Activated naive CD4-positive, alpha-beta T cell treated with anti-CD3 and anti-CD28 coated beads for 36 hours (primary cell): ENCODE measurements at regions of chr17 and their contacts with region 1.

Region 1: GRCh38 chr17:31321481-31321880 is at the start of gene EVI2A:
- DNase-seq: peak; percentile 89
- H3K4me3 Mint-ChIP-seq: peak within 1 kb of the TSS; percentile 76
- H3K27ac Mint-ChIP-seq: peak within 1 kb of the TSS; percentile 96
- H3K4me1 Mint-ChIP-seq: peaks cover 28% of the 10 kb centered on the region
- H3K27me3 Mint-ChIP-seq: no peaks in the 10 kb centered on the region
- total RNA-seq, gene EVI2A: 22.0 to 22.5 TPM

Region 2: DNA sequence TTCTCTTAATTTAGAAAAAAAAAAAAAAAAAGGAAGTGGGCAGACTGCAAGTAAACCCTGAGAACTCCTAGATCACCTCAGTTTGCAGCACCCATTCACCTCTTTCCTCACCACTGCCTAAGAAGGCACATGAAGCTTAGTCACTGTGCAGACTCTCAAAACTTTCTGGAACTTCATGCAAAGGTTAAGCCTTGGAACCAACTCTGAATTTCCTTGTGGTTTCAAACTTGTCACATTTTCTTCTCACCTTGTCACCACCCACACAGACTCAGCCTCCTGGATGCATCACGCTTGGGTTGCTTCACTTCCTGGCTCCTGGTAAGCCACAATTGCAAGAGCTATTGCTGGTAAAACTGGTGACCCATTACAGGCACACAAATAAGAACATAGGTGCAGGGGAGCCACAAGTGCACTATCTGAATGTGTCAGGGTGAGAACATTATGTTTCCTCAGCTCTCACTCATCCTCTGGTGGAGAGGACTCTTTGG is 957.7 kb before region 1 on chr17:
- CTCF ChIA-PET with region 1: no interaction called
- intact Hi-C with region 1: loop called (anchors 5 kb)
- DNase-seq: peak; percentile 97
- H3K4me3 Mint-ChIP-seq: no peak overlapping the region
- H3K27ac Mint-ChIP-seq: peak overlapping the region; percentile 79
- H3K4me1 Mint-ChIP-seq: peaks cover 31% of the 10 kb centered on the region
- H3K27me3 Mint-ChIP-seq: no peaks in the 10 kb centered on the region

Region 3: DNA sequence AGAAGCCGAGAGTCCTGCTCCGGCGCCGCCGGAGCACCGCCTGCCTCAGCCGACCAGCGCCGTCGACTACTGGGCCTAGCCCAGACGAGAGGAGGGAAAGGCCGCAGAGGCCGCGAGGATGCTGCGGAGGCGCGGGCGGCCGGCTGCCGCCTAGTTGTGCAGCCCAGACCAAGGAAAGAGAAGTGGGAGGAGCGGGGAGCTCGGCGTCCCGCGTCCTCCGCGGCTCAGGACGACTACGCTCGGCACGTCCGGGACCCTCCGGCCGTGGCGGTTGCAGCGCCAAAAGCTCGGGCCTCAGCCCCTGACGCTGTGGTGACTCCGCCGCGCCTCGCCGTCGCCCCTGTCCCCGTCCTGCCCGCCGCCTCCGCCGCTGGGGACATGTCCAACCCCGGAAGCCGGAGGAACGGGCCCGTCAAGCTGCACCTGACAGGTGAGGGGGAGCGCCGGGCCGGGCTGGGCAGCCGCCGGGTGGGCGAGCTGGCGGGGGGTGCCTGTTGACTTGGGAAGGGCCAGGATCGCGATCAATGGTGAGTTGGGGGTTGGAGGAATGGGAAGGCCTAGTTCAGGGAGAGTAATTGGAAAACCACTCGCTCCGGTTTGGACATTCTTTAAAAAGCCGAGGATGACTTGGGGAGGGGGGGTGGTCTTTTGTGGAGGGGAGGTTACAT is 313.0 kb before region 1 on chr17:
- CTCF ChIA-PET with region 1: no interaction called
- intact Hi-C with region 1: loop called (anchors 5 kb)
- DNase-seq: peak; percentile 65
- H3K4me3 Mint-ChIP-seq: peak overlapping the region; percentile 85
- H3K27ac Mint-ChIP-seq: peak overlapping the region; percentile 82
- H3K4me1 Mint-ChIP-seq: peaks cover 15% of the 10 kb centered on the region
- H3K27me3 Mint-ChIP-seq: peaks cover 2% of the 10 kb centered on the region

Region 4: DNA sequence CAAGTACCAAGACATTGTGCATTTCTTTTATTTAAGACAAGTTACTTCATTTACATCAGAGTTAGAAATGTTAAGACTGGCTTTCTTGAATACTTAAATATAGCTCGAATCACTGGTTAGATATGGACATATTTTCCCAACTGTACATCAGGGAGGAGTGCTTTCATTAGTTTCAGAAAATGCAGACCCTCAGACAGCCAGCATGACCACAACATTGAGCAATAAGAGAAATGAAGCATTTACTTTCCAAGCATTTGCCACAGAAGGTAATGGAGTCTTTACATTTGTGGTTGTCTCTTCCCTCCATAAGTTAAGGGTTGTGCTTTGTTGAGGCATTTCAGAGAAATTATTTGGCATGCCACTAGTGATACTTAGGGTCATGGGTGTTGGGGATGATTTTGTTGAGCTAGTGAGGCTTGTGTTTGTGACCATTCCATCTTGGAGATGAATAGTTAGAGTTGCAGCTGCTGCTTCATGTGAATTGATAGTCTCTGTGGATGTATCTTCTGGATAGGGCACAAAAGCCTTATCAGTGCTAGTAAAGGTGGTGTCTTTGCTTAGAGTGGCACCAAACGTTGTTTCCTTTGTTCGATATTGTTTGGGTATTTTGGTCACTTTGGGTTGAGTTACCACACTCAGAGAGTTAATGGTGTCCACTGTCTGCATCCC is 26.5 kb before region 1 on chr17:
- CTCF ChIA-PET with region 1: no interaction called
- intact Hi-C with region 1: no loop called
- DNase-seq: no peak
- H3K4me3 Mint-ChIP-seq: no peak overlapping the region
- H3K27ac Mint-ChIP-seq: no peak overlapping the region
- H3K4me1 Mint-ChIP-seq: peaks cover 22% of the 10 kb centered on the region
- H3K27me3 Mint-ChIP-seq: no peaks in the 10 kb centered on the region

Region 5: GRCh38 chr17:31308372-31309334 is 12.8 kb before region 1 on chr17:
- CTCF ChIA-PET with region 1: interaction called, 8 read pairs
- intact Hi-C with region 1: loop called (anchors 1 kb)
- DNase-seq: no peak
- H3K4me3 Mint-ChIP-seq: peak overlapping the region; percentile 87
- H3K27ac Mint-ChIP-seq: peak overlapping the region; percentile 100
- H3K4me1 Mint-ChIP-seq: peaks cover 61% of the 10 kb centered on the region
- H3K27me3 Mint-ChIP-seq: no peaks in the 10 kb centered on the region

Region 6: DNA sequence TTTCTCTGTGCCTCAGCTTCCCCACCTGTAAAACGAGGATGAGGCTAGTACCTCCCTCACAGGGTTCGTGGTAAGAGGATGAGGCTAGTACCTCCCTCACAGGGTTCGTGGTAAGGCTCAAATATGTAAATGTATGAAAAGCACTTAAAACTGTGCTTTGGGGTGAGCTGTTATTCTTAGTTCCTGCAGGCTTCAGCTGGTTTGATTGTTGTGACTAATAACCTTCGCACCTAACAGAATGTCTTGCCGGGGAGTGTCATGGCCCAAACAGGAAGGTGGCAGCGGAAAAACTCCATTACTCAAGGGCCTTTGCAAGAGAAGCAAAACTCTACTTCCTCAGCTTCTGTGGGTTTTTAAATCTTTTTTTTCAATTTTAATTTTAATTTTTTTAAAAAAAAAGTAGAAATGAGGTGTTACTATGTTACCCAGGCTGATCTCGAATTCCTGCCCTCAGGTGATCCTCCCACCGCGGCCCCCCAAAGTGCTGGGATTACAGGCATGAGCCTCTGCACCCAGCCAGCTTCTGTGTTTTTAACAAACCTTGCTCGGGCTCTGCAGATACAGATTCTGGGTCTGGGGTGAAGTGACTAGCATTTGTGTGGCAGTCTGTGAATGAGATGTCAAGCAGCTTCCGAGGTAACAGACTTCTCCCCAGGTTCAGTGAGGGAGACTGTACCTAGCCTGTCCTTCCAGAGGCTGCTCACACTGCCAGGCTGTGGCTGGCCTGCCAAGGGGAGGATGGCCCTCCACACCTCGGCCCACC is 173.0 kb after region 1 on chr17:
- CTCF ChIA-PET with region 1: no interaction called
- intact Hi-C with region 1: loop called (anchors 2 kb)
- DNase-seq: peak; percentile 86
- H3K4me3 Mint-ChIP-seq: peak overlapping the region; percentile 64
- H3K27ac Mint-ChIP-seq: peak overlapping the region; percentile 96
- H3K4me1 Mint-ChIP-seq: peaks cover 89% of the 10 kb centered on the region
- H3K27me3 Mint-ChIP-seq: no peaks in the 10 kb centered on the region

Region 7: DNA sequence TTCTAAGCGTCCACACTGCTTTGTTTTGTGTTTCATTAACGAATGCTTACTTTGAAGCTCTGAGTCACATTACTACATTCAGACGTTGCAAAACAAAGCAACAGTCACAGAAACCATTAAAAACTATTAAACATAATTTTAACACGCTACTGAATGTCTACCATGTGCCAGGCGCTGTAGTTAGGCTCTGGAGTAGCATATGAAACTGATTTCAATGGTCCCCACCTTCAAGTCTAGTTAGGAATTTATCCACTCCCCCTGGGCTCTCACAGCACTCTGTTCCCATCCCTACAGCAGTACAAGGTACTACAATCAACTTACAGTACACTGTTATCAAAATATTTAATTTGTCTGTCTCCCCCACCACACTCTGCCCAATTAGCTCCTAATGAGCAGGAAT is 579.4 kb after region 1 on chr17:
- CTCF ChIA-PET with region 1: no interaction called
- intact Hi-C with region 1: loop called (anchors 5 kb)
- DNase-seq: no peak
- H3K4me3 Mint-ChIP-seq: no peak overlapping the region
- H3K27ac Mint-ChIP-seq: no peak overlapping the region
- H3K4me1 Mint-ChIP-seq: peaks cover 33% of the 10 kb centered on the region
- H3K27me3 Mint-ChIP-seq: no peaks in the 10 kb centered on the region

Region 8: DNA sequence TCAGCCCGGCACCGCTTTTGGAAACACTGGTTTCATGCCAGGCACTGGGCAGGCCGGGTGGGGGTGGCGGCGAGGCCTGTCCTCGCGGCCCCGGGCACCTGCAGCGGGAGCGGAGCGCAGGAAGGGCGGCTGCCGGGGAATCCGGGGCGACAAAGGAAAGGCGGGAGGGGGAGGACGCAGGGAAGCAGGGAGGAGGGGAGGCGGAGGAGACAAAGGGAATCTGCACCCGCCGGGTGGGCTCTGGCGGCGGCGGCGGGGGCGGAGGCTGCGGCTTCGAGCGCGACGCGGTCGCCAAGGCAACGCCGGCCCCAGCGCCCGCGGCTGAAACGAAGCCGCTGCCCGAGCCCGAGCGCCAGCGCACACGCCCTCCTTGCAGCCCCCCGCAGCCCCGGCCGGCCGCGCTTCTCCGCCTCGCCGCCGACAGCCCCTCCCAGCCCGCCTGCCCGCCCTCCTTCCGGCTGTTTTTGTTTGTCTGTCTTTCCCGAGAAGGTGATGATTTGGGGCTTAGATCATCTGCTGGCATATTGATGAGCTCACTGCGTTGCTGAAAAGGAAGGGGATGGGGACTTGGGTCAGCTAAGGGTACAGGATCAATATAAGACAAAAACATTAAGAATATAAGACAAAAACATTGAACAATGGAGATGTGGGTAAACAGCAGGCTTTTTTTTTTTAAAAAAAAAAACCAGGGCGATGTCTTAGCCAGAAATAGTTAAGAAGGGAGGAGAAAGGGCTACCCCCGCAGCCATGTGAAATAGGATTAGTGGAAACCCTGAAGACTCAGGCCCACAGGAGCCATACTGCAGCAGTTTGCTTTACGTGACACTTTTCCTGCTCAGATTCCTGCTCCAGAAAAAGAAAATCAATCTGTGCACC is 1198.0 kb after region 1 on chr17:
- CTCF ChIA-PET with region 1: no interaction called
- intact Hi-C with region 1: loop called (anchors 5 kb)
- DNase-seq: peak; percentile 85
- H3K4me3 Mint-ChIP-seq: peak overlapping the region; percentile 73
- H3K27ac Mint-ChIP-seq: peak overlapping the region; percentile 92
- H3K4me1 Mint-ChIP-seq: peaks cover 88% of the 10 kb centered on the region
- H3K27me3 Mint-ChIP-seq: no peaks in the 10 kb centered on the region